GM12878 (cell line): ENCODE measurements at regions of chrX and their contacts with region 1.

Region 1: DNA sequence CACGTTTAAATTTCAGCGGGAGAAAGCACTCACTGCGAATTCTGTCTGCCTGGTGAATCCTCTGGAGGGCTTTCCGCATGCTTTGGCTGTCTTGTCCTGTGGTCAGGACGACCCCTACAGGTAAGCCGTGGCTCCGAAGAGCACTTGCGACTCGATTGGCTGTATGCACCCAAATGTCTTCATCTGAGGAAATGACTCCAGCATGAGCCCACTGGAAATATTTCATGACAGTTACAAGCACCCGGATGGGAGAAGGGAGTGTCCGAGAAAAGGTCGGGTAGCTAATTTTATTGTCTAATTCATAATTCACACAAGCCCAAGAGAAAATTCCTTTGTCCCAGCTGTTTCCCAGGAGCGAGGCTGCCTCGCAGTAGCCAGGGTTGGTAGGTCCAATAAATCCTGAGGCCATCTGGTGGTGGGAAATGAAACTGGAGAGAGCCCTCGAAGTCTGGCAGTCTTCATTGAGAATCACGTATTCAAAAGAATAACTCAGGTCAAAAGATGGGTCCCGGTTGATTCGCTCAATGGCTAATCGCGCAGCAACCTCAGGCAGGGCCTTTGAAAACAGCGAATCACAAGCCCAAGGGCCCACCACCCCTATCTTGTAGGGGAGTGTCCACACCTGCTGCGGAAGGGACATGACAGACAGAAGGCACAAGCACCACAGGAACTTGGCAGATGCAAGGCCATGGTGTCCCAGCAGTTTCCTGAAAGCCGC is 6.6 kb downstream of the GUCY2F start:
- DNase-seq: no peak
- ATAC-seq: peak; percentile 61
- H3K4me3 ChIP-seq: no peak overlapping the region
- H3K27ac ChIP-seq: no peak overlapping the region
- H3K4me1 ChIP-seq: no peaks in the 10 kb centered on the region
- H3K27me3 ChIP-seq: no peaks in the 10 kb centered on the region; a peak in 1 of 4 replicates
- CTCF ChIP-seq: peak in 2 of 3 experiments; percentile 13 to 19; a peak in 2 of 6 replicates
- EP300 ChIP-seq: no peak
- POLR2A ChIP-seq: no peak
- RAD21 ChIP-seq: 0 out of 2 replicates have a peak, but pooled peaks have one; percentile 22

Region 2: DNA sequence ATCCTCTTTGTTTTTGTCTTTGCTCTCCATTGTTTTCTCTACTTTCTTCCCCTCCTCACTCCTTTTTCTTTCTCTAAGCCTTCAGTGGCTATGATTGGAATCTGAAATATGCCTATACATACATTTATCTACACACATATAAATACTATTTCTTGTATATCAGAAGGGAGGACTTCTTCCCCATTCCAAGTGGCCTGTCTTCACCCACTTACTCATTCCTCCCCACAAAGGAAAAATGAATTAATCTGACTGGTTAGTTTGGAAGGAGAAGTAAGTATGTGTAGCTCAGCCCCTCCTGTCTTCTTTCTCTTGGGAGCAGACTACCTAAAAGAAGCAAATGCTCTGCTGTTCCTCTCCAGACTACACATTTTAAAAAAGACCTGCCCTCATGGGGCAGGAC is 11.1 kb before region 1 on chrX:
- CTCF ChIA-PET with region 1: interaction called, 10 read pairs
- POLR2A ChIA-PET with region 1: no interaction called
- RAD21 ChIA-PET with region 1: interaction called, 3 read pairs
- SMC1A ChIA-PET with region 1: interaction called, 5 read pairs
- in situ Hi-C with region 1: no loop called
- intact Hi-C with region 1: no loop called
- DNase-seq: no peak
- ATAC-seq: no peak
- H3K4me3 ChIP-seq: no peak overlapping the region
- H3K27ac ChIP-seq: no peak overlapping the region
- H3K4me1 ChIP-seq: no peaks in the 10 kb centered on the region
- H3K27me3 ChIP-seq: no peaks in the 10 kb centered on the region
- CTCF ChIP-seq: no peak
- EP300 ChIP-seq: no peak
- POLR2A ChIP-seq: no peak
- RAD21 ChIP-seq: no peak

Region 3: GRCh38 chrX:109511113-109511512 is 35.8 kb after region 1 on chrX:
- CTCF ChIA-PET with region 1: no interaction called
- POLR2A ChIA-PET with region 1: no interaction called
- RAD21 ChIA-PET with region 1: no interaction called
- SMC1A ChIA-PET with region 1: no interaction called
- in situ Hi-C with region 1: no loop called
- intact Hi-C with region 1: no loop called
- DNase-seq: no peak
- ATAC-seq: peak; percentile 66
- H3K4me3 ChIP-seq: no peak overlapping the region
- H3K27ac ChIP-seq: no peak overlapping the region
- H3K4me1 ChIP-seq: no peaks in the 10 kb centered on the region
- H3K27me3 ChIP-seq: no peaks in the 10 kb centered on the region
- CTCF ChIP-seq: no peak
- EP300 ChIP-seq: no peak
- POLR2A ChIP-seq: no peak
- RAD21 ChIP-seq: no peak